ENCODE measurements at regions of chr7 and their contacts with region 1.

Region 1: DNA sequence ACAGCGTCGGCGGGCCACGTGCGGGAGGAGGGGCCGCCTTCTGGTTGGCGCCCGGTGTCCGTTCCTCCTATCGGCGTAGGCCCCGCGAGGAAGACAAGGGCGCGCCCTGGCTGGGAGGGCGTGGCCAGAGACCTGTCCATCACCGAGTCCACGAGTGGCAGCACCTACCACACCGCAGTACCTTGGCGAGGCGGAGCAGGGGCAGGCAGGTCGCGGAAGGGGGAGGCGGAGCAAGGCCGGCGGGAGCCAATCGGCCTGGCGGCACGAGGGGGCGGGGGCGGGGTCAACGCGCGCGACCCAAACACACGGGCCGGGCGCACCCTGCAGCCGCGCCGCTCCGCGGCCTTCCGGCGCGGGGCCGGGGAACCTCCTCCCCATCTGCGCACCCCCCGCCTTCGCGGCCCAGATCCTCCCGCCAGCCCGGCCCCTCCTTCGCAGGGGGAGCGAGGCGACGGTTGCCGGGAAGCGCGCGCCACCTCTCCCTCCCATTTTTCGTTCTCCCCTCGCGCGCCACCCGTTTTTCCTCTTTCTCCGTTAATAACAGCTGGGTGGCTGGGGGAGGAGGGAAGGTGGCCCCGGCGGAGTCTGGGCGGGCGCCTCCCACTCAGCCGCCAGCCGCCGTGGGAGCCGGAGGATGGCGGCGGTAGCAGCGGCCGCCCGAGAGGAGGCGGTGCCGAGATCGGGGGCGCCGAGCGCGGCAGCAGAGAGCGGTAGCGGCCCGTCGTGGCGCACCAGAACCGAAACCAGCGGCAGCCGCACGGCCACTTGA is at the start of gene ZNRF2:
- DNase-seq: peak; percentile 99
- H3K4me3 ChIP-seq: peak within 1 kb of the TSS; percentile 54 to 91 (median 59)
- H3K27ac ChIP-seq: peak within 1 kb of the TSS; percentile 93
- H3K4me1 ChIP-seq: peaks cover 9% of the 10 kb centered on the region
- H3K27me3 ChIP-seq: no peaks in the 10 kb centered on the region
- CTCF ChIP-seq: peak in 1 of 2 donors; percentile 46
- total RNA-seq, gene ZNRF2: 13.1 to 32.3 TPM

Region 2: GRCh38 chr7:30134611-30135545 is 149.6 kb before region 1 on chr7 and contains the start of gene MTURN:
- CTCF ChIA-PET with region 1: no interaction called
- dilution Hi-C with region 1: no loop called
- in situ Hi-C with region 1: no loop called
- intact Hi-C with region 1: no loop called
- DNase-seq: peak; percentile 76
- H3K4me3 ChIP-seq: peak within 1 kb of the TSS; percentile 57 to 74 (median 73)
- H3K27ac ChIP-seq: peak within 1 kb of the TSS; percentile 66
- H3K4me1 ChIP-seq: peaks cover 14% of the 10 kb centered on the region
- H3K27me3 ChIP-seq: no peaks in the 10 kb centered on the region
- CTCF ChIP-seq: no peak
- total RNA-seq, gene MTURN: 9.7 to 15.5 TPM

Region 3: GRCh38 chr7:30157204-30157603 is 127.3 kb before region 1 on chr7:
- CTCF ChIA-PET with region 1: no interaction called
- dilution Hi-C with region 1: no loop called
- in situ Hi-C with region 1: no loop called
- intact Hi-C with region 1: no loop called
- DNase-seq: no peak
- H3K4me3 ChIP-seq: no peak overlapping the region
- H3K27ac ChIP-seq: no peak overlapping the region
- H3K4me1 ChIP-seq: peaks cover 10% of the 10 kb centered on the region
- H3K27me3 ChIP-seq: no peaks in the 10 kb centered on the region
- CTCF ChIP-seq: no peak

Region 4: GRCh38 chr7:30225863-30226613 is 58.4 kb before region 1 on chr7:
- CTCF ChIA-PET with region 1: interaction called, 3 read pairs
- dilution Hi-C with region 1: no loop called
- in situ Hi-C with region 1: no loop called
- intact Hi-C with region 1: loop called (anchors 2 kb)
- DNase-seq: peak; percentile 97
- H3K4me3 ChIP-seq: no peak overlapping the region
- H3K27ac ChIP-seq: peak overlapping the region; percentile 83
- H3K4me1 ChIP-seq: peaks cover 37% of the 10 kb centered on the region
- H3K27me3 ChIP-seq: no peaks in the 10 kb centered on the region
- CTCF ChIP-seq: no peak

Region 5: DNA sequence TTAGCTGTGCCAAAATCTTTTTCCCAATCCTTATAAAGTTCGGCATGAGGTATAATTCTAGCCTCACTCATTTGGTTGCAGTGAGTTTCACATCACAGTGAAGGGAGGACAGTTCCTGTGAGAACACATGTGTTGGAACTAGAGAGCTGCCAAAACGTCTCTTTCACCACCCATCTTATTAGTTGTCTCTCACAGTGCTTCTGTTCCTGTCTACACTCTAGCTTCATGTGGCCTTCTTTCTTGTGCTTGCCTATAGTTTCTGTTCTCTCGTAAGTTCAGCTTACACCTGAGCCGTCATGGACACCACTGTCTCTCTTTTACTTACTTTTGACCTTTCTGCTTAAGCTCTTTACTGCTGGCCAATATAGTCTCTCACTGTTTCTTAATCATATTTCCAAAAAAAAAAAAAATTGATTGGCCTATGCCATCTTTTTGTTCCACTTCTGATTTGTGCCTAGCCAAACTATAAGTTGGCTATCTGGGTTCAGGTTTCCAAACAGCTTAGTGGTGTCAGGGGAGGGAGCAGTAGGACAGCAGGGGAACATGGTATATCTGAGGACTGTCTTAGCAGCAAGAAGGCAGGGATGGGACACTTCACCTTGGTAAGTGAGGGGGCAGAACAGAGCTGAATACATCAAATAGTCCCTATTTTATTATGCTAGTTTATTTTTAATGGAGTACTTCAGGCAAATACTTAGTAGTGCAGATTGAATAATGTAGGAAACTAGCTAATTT is 38.0 kb after region 1 on chr7:
- CTCF ChIA-PET with region 1: no interaction called
- dilution Hi-C with region 1: no loop called
- in situ Hi-C with region 1: no loop called
- intact Hi-C with region 1: loop called (anchors 2 kb)
- DNase-seq: peak; percentile 58
- H3K4me3 ChIP-seq: peak overlapping the region in 2 of 3 experiments; percentile 5 to 44
- H3K27ac ChIP-seq: peak overlapping the region; percentile 87
- H3K4me1 ChIP-seq: peaks cover 50% of the 10 kb centered on the region
- H3K27me3 ChIP-seq: no peaks in the 10 kb centered on the region
- CTCF ChIP-seq: no peak

Region 6: DNA sequence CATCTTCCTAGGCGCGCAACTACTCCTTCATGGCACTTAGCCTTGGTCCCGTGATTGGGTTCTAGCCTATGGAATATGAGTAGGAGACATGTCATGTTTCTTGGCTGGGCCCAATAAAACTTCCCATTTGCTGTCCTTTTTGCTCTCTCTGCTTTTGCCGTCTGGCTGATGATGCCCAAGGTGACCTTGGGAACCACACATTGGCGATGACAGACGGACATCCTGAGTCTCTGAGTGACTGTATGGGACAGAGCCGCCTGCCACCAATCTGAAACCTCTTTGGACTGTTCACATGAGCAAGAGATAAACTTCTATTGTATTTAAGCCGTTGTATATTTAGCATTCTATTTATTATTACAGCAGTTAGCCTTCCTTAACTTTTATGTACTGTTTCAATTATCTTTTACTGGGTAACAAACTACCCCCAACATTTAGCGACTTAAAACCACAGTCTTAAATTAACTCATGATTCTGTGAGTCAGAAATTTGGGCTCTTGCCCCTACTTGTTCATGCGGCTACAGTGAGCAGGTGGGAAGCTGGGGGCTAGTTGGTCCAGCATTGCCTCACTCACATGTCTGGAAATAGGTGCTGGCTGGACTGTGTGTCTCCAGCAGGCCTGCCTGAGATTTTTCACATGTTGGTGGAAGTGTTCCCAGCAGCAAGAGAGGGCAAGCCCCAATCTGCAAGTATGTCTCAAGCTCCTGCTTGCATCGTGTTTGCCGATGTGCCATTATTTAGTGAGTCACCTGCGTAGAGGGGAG is 122.4 kb after region 1 on chr7:
- CTCF ChIA-PET with region 1: no interaction called
- dilution Hi-C with region 1: no loop called
- in situ Hi-C with region 1: loop called (anchors 5 to 10 kb)
- intact Hi-C with region 1: loop called (anchors 1 kb)
- DNase-seq: peak; percentile 97
- H3K4me3 ChIP-seq: no peak overlapping the region
- H3K27ac ChIP-seq: peak overlapping the region; percentile 81
- H3K4me1 ChIP-seq: peaks cover 40% of the 10 kb centered on the region
- H3K27me3 ChIP-seq: no peaks in the 10 kb centered on the region
- CTCF ChIP-seq: no peak

Region 7: GRCh38 chr7:30564243-30564892 is 279.9 kb after region 1 on chr7:
- CTCF ChIA-PET with region 1: no interaction called
- dilution Hi-C with region 1: no loop called
- in situ Hi-C with region 1: loop called in 1 of 2 experiments (anchors 10 kb)
- intact Hi-C with region 1: loop called (anchors 2 kb)
- DNase-seq: peak; percentile 78
- H3K4me3 ChIP-seq: no peak overlapping the region
- H3K27ac ChIP-seq: peak overlapping the region; percentile 77
- H3K4me1 ChIP-seq: peaks cover 24% of the 10 kb centered on the region
- H3K27me3 ChIP-seq: no peaks in the 10 kb centered on the region
- CTCF ChIP-seq: peak; percentile 81 to 91

Region 8: GRCh38 chr7:30851651-30852307 is 567.3 kb after region 1 on chr7:
- CTCF ChIA-PET with region 1: no interaction called
- dilution Hi-C with region 1: no loop called
- in situ Hi-C with region 1: no loop called
- intact Hi-C with region 1: no loop called
- DNase-seq: no peak
- H3K4me3 ChIP-seq: no peak overlapping the region
- H3K27ac ChIP-seq: no peak overlapping the region
- H3K4me1 ChIP-seq: peaks cover 2% of the 10 kb centered on the region
- H3K27me3 ChIP-seq: no peaks in the 10 kb centered on the region
- CTCF ChIP-seq: no peak

Measured in mammary epithelial cell (primary cell).